Gastrocnemius medialis (tissue), 4 donors: ENCODE measurements at regions of chr4 and their contacts with region 1.

Region 1: GRCh38 chr4:88591787-88592599 is at the start of gene HERC3:
- DNase-seq: peak; percentile 87 to 92
- ATAC-seq: peak; percentile 86 to 91
- H3K4me3 ChIP-seq: peak within 1 kb of the TSS; percentile 72 to 91 (median 82)
- H3K27ac ChIP-seq: peak within 1 kb of the TSS; percentile 91 to 95 (median 92)
- H3K4me1 ChIP-seq: peaks cover 18 to 26% of the 10 kb centered on the region in 2 donors
- H3K27me3 ChIP-seq: no peaks in the 10 kb centered on the region
- CTCF ChIP-seq: peak in 2 of 5 experiments; percentile 26 to 34
- POLR2A ChIP-seq: peak; percentile 59 to 68
- total RNA-seq, gene HERC3: 16.2 to 32.3 (median 21.9) TPM

Region 2: DNA sequence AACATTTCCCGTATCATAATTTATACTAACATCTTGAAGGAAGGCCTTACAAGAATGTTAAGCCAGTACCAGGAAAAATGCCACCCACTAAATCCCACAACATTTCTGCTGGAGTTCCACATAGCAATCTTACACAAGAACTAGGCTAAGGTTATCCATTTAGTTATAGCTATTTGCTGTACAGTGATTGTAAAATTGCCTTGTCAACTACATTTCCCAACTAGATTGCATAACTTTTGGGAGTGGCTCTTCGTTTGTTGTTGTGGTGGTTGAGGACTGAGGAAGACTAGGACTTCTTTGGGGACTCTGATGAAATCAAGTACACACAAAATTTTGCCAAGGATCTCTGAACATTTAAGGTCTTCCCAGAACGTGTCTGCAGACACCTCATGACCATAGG is 784.6 kb before region 1 on chr4:
- in situ Hi-C with region 1: no loop called
- intact Hi-C with region 1: no loop called
- DNase-seq: no peak
- ATAC-seq: peak; percentile 54 to 69
- H3K4me3 ChIP-seq: no peak overlapping the region
- H3K27ac ChIP-seq: no peak overlapping the region
- H3K4me1 ChIP-seq: no peaks in the 10 kb centered on the region
- H3K27me3 ChIP-seq: no peaks in the 10 kb centered on the region
- CTCF ChIP-seq: no peak
- POLR2A ChIP-seq: no peak

Region 3: DNA sequence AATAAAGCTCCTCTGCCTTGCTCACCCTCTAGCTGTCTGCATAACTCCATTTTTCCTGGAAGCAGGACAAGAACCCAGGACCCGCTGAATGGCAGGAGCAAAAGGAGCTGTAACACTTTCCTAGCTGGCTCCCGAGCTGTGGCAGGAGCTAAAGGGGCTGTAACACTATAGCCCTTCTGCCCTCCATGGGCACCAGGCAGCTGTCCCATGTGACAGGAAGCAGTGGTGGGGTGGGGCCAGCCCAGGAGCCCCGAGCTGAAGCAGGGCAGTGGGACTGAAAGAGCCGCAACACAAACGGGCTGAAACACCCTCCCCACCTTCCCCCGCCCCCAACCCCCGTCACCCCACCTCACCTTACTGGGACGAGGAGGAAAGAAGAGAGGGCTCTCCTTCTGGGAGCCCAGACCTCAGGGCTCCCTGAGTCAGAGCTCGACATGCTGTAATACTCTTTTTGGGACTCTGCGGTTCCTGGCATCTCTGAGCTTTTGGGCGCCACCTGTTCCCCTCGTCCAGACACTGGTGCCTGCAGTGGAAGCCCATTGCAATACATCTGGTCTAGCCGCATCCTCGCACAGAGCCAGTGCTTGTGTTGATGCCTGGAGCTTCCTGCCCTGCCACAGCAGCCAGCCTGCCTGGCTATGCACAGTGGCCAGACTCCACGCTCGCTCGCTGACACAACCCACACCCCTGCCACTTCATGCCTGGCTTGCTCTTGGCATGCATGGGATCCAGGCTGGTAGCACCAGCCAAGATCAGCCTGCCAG is 347.0 kb before region 1 on chr4:
- in situ Hi-C with region 1: no loop called
- intact Hi-C with region 1: loop called (anchors 10 kb)
- DNase-seq: peak; percentile 70 to 93
- ATAC-seq: peak; percentile 78 to 85
- H3K4me3 ChIP-seq: peak overlapping the region; percentile 2 to 42 (median 36)
- H3K27ac ChIP-seq: peak overlapping the region; percentile 81 to 89 (median 86)
- H3K4me1 ChIP-seq: peaks cover 32 to 39% of the 10 kb centered on the region in 2 donors
- H3K27me3 ChIP-seq: no peaks in the 10 kb centered on the region
- CTCF ChIP-seq: no peak
- POLR2A ChIP-seq: no peak

Region 4: DNA sequence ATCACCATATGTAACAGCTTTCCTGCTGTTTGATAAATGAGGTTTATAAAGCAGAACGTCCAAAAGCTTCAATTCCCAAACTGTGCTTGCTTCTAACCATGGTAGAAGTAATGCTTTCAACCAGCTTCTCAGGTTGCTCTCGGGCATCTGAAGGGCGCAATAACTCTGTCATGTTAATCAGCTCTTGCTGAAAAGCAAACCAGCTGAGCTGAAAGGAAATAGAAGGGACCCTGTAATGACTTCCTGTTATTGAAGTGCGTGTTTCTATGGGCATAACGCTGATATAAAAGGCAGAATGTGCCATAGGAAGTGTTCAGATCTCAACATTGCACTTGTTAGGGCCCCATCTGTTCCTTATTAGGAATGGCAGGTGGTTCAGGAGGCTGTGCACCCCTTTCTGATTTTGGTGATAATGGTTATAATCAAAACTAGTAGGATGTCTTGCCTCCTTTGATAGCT is 21.5 kb after region 1 on chr4:
- in situ Hi-C with region 1: no loop called
- intact Hi-C with region 1: loop called (anchors 1 kb)
- DNase-seq: peak; percentile 23 to 39
- ATAC-seq: peak; percentile 52 to 63
- H3K4me3 ChIP-seq: no peak overlapping the region
- H3K27ac ChIP-seq: peak overlapping the region; percentile 75 to 86 (median 79)
- H3K4me1 ChIP-seq: peaks cover 71 to 84% of the 10 kb centered on the region in 2 donors
- H3K27me3 ChIP-seq: no peaks in the 10 kb centered on the region
- CTCF ChIP-seq: no peak
- POLR2A ChIP-seq: no peak

Region 5: GRCh38 chr4:88659055-88659889 is 67.3 kb after region 1 on chr4:
- in situ Hi-C with region 1: no loop called
- intact Hi-C with region 1: loop called (anchors 2 kb)
- DNase-seq: peak; percentile 40 to 48
- ATAC-seq: peak; percentile 97 to 98
- H3K4me3 ChIP-seq: no peak overlapping the region
- H3K27ac ChIP-seq: peak overlapping the region in 3 of 4 donors; percentile 9 to 40 (median 32)
- H3K4me1 ChIP-seq: peaks cover 0 to 10% of the 10 kb centered on the region in 2 donors
- H3K27me3 ChIP-seq: no peaks in the 10 kb centered on the region
- CTCF ChIP-seq: peak; percentile 70 to 83 (median 74)
- POLR2A ChIP-seq: no peak